ENCODE measurements at regions of chr11 and their contacts with region 1.

Region 1: GRCh38 chr11:59171508-59172322 is at the start of gene DTX4:
- DNase-seq: peak; percentile 27
- H3K4me3 ChIP-seq: peak within 1 kb of the TSS; percentile 59
- H3K27me3 ChIP-seq: no peaks in the 10 kb centered on the region; the same call in 1 of the 2 replicates
- CTCF ChIP-seq: peak; percentile 97
- polyA plus RNA-seq, gene DTX4: 0.98 and 1.2 TPM in 2 replicates

Region 2: GRCh38 chr11:59011655-59012397 is 159.9 kb before region 1 on chr11:
- CTCF ChIA-PET with region 1: no interaction called
- POLR2A ChIA-PET with region 1: no interaction called
- DNase-seq: no peak
- H3K4me3 ChIP-seq: no peak overlapping the region
- H3K27me3 ChIP-seq: peaks cover 1% of the 10 kb centered on the region; the same call in 1 of the 2 replicates
- CTCF ChIP-seq: no peak

Region 3: GRCh38 chr11:59158206-59159068 is 13.3 kb before region 1 on chr11:
- CTCF ChIA-PET with region 1: interaction called, 29 read pairs
- POLR2A ChIA-PET with region 1: interaction called, 4 read pairs
- DNase-seq: no peak
- H3K4me3 ChIP-seq: no peak overlapping the region
- H3K27me3 ChIP-seq: peaks cover 4% of the 10 kb centered on the region
- CTCF ChIP-seq: peak; percentile 76

Region 4: DNA sequence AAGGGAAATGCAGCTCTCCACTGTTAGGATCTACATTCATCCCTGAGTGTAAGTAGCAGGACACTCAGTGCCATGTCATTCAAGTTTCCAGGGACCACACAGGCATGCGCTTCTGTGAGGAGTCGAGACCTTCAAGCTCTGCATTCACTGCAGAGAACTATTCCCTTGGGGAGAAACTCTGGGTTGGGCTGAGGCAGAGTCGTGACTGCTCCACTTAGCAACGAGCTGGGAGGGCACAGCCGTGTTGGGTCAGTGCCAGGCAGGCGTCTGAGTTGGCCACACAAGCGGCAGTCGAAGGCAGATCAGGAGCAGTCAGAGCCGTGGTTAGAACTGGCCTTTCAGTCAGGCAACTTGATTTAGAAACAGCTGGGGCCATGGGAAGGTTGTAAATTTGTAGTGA is 26.3 kb after region 1 on chr11:
- CTCF ChIA-PET with region 1: interaction called, 202 read pairs
- POLR2A ChIA-PET with region 1: no interaction called
- DNase-seq: no peak
- H3K4me3 ChIP-seq: no peak overlapping the region
- H3K27me3 ChIP-seq: no peaks in the 10 kb centered on the region
- CTCF ChIP-seq: no peak

Region 5: DNA sequence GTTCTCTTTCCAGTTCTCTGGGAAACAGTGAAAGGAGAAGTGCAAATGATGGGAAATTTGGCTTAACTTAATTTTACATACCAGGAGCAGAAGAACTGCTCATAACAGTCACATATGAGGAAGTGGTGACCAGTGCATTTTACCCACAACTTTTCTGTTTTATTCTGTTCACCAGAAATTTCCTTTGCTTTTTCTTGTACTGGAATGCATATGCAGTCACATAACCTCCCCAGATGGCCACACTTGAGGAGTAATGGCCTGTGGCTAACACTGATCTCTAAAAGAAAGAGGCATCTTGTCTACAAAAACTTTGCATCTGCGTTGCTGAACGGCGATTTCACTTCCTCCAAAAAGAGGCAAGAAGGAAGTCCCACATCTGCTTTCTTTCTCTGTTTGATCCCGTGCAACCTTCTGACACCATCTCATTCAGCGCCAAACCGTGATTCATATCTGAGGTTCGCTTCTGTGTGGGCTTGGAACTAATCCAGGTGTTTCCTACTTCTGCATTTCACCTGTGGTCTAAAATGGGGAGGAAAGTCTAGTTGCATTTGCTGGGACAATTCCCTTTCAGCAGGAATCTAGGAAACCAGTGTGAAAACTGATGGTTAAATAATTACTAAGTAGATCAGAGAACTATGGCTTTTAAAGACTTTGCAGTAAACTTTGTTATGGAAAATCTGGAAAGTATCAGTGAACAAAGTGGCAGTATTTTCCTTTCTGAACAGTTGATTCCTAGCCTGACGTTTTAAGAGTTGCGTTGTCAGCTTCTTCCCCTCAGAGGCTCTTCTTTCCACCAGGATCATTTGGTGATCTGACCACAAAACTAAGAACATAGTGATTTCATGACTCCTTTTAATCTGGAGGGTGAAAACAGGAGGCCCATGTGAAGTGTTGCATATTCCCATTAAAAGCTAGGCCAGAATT is 45.2 kb after region 1 on chr11:
- CTCF ChIA-PET with region 1: interaction called, 37 read pairs
- POLR2A ChIA-PET with region 1: no interaction called
- DNase-seq: no peak
- H3K4me3 ChIP-seq: no peak overlapping the region
- H3K27me3 ChIP-seq: no peaks in the 10 kb centered on the region
- CTCF ChIP-seq: no peak

Region 6: GRCh38 chr11:59272771-59273372 is 101.2 kb after region 1 on chr11:
- CTCF ChIA-PET with region 1: interaction called, 15 read pairs
- POLR2A ChIA-PET with region 1: no interaction called
- DNase-seq: no peak
- H3K4me3 ChIP-seq: no peak overlapping the region
- H3K27me3 ChIP-seq: no peaks in the 10 kb centered on the region; the same call in 1 of the 2 replicates
- CTCF ChIP-seq: no peak

Region 7: DNA sequence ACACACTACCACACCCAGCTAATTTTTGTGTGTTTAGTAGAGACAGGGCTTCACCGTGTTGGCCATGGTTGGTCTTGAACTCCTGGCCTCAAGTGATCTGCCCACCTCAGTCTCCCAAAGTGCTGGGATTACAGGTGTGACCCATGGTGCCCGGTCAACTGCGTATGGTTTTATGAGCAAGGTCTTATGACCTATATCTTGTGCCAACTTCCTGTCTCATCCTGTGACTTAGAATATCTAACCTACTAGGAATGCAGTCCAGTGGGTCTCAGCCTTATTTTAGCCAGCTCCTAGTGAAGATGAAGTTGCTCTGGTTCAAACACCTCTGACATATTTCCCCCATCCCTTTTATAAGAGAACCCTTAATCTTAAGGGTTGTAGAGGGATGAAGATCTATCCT is 120.9 kb after region 1 on chr11:
- CTCF ChIA-PET with region 1: interaction called, 28 read pairs
- POLR2A ChIA-PET with region 1: no interaction called
- DNase-seq: no peak
- H3K4me3 ChIP-seq: no peak overlapping the region
- H3K27me3 ChIP-seq: no peaks in the 10 kb centered on the region
- CTCF ChIP-seq: no peak